ENCODE measurements at regions of chr14 and their contacts with region 1.

Region 1: DNA sequence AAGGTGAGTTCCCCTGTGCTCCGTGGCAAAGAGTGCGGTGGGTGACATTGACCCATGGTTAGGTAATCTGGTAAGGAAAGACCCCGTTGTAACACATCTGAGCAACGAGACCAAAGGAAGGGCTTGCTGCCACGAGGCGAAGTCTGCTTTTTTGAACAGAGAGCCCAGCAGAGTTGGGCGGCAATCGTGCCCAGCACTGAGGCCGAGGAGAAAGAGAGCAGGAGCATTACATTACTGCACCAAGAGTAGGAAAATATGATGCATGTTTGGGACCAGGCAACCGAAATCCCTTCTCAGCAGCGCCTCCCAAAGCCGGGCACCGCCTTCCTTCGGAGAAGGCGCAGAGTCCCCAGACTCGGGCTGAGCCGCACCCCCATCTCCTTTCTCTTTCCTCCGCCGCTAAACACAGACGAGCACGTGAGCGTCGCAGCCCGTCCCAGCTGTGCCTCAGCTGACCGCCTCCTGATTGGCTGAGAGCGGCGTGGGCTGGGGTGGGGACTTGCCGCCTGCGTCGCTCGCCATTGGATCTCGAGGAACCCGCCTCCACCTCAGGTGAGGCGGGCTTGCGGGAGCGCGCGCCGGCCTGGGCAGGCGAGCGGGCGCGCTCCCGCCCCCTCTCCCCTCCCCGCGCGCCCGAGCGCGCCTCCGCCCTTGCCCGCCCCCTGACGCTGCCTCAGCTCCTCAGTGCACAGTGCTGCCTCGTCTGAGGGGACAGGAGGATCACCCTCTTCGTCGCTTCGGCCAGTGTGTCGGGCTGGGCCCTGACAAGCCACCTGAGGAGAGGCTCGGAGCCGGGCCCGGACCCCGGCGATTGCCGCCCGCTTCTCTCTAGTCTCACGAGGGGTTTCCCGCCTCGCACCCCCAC is at the start of gene HIF1A:
- DNase-seq: peak; percentile 83 to 98 (median 96)
- ATAC-seq: peak; percentile 97
- H3K4me3 ChIP-seq: peak within 1 kb of the TSS; percentile 92
- H3K4me3 Mint-ChIP-seq: peak within 1 kb of the TSS; percentile 95 to 99 (median 98)
- H3K27ac ChIP-seq: peak within 1 kb of the TSS; percentile 99
- H3K27ac Mint-ChIP-seq: peak within 1 kb of the TSS; percentile 96 to 99 (median 99)
- H3K4me1 ChIP-seq: peaks cover 9 to 17% of the 10 kb centered on the region in 2 donors
- H3K4me1 Mint-ChIP-seq: peaks cover 36 to 69% (median 62%) of the 10 kb centered on the region in 7 donors
- H3K27me3 ChIP-seq: no peaks in the 10 kb centered on the region
- H3K27me3 Mint-ChIP-seq: peaks cover 0 to 2% (median 0%) of the 10 kb centered on the region in 5 donors
- total RNA-seq, gene HIF1A: 88.8 to 358 (median 143) TPM

Region 2: GRCh38 chr14:61280526-61281185 is 414.4 kb before region 1 on chr14:
- CTCF ChIA-PET with region 1: interaction called, 3 read pairs
- POLR2A ChIA-PET with region 1: no interaction called
- intact Hi-C with region 1: loop called in 1 of 2 experiments (anchors 1 kb)
- DNase-seq: peak; percentile 59 to 83 (median 79)
- ATAC-seq: peak; percentile 92
- H3K4me3 ChIP-seq: peak overlapping the region; percentile 87
- H3K4me3 Mint-ChIP-seq: peak overlapping the region; percentile 89 to 97 (median 91)
- H3K27ac ChIP-seq: peak overlapping the region; percentile 77
- H3K27ac Mint-ChIP-seq: peak overlapping the region; percentile 83 to 95 (median 93)
- H3K4me1 ChIP-seq: peaks cover 0 to 10% of the 10 kb centered on the region in 2 donors
- H3K4me1 Mint-ChIP-seq: peaks cover 18 to 54% (median 35%) of the 10 kb centered on the region in 7 donors
- H3K27me3 ChIP-seq: no peaks in the 10 kb centered on the region
- H3K27me3 Mint-ChIP-seq: peaks cover 0 to 52% (median 0%) of the 10 kb centered on the region in 5 donors

Region 3: DNA sequence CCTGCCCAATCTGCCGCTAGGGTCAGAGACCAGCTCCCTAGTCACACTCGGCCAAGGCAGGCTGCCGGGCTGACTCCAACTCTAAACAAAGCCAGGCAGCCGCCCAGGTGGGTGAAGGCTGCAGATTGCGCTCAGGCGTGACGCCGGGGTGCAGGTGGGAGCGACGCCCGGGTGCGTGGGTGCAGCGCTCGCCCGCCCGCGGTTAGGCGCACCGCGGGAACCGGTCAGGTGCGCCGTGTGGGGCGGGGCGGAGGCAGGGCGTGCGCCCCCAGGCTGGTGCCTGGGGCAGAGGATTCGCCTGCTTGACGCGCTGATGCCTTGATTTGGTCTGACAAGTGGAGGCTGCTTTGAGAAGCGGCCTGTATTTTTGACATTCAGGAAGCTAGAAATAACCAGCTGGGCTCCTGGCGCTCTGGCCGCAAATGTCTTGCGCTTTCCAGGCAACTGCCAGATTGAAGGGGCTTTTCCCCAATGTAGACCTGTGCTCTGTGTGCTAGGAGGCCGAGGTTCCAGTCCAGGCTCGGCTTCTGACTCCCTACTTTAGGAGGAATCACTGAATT is 126.4 kb before region 1 on chr14:
- CTCF ChIA-PET with region 1: interaction called, 3 read pairs
- POLR2A ChIA-PET with region 1: interaction called, 5 read pairs
- intact Hi-C with region 1: loop called in 1 of 2 experiments (anchors 1 kb)
- DNase-seq: peak; percentile 49 to 77 (median 73)
- ATAC-seq: peak; percentile 86
- H3K4me3 ChIP-seq: peak overlapping the region; percentile 47
- H3K4me3 Mint-ChIP-seq: peak overlapping the region; percentile 74 to 89 (median 82)
- H3K27ac ChIP-seq: peak overlapping the region; percentile 26
- H3K27ac Mint-ChIP-seq: peak overlapping the region; percentile 44 to 95 (median 86)
- H3K4me1 ChIP-seq: peaks cover 0 to 34% of the 10 kb centered on the region in 2 donors
- H3K4me1 Mint-ChIP-seq: peaks cover 40 to 77% (median 57%) of the 10 kb centered on the region in 7 donors
- H3K27me3 ChIP-seq: no peaks in the 10 kb centered on the region
- H3K27me3 Mint-ChIP-seq: peaks cover 0 to 10% (median 0%) of the 10 kb centered on the region in 5 donors

Region 4: GRCh38 chr14:61662437-61663311 is 32.4 kb before region 1 on chr14:
- CTCF ChIA-PET with region 1: interaction called, 3 read pairs
- POLR2A ChIA-PET with region 1: interaction called, 25 read pairs
- intact Hi-C with region 1: loop called (anchors 1 kb)
- DNase-seq: peak in 8 of 9 donors; percentile 23 to 56 (median 46)
- ATAC-seq: peak; percentile 91
- H3K4me3 ChIP-seq: peak overlapping the region; percentile 26
- H3K4me3 Mint-ChIP-seq: peak overlapping the region; percentile 49 to 91 (median 79)
- H3K27ac ChIP-seq: peak overlapping the region; percentile 54
- H3K27ac Mint-ChIP-seq: peak overlapping the region; percentile 70 to 96 (median 89)
- H3K4me1 ChIP-seq: peaks cover 40 to 65% of the 10 kb centered on the region in 2 donors
- H3K4me1 Mint-ChIP-seq: peaks cover 45 to 68% (median 63%) of the 10 kb centered on the region in 7 donors
- H3K27me3 ChIP-seq: no peaks in the 10 kb centered on the region
- H3K27me3 Mint-ChIP-seq: no peaks in the 10 kb centered on the region

Region 5: DNA sequence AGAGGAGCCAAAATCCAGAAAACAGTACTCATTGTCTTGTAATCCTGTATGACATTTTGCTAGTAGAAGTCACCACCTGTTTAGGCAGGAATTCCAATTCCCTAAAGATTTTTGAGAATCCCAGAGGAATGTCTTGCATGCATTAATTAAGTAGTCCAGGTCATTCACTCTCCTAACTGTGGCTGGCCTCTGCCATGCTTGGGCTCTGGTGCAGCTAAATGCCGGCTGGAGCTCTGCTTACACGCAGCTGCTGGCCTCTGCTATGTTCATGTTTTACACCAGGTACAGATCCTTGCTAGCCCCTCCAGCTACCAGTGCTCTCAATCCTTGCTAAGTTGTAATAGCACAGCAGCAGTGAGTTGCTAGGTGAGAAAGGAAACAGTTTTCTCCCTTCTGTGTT is 16.1 kb before region 1 on chr14:
- CTCF ChIA-PET with region 1: interaction called, 4 read pairs
- POLR2A ChIA-PET with region 1: interaction called, 13 read pairs
- intact Hi-C with region 1: no loop called
- DNase-seq: no peak
- ATAC-seq: no peak
- H3K4me3 ChIP-seq: no peak overlapping the region
- H3K4me3 Mint-ChIP-seq: no peak overlapping the region
- H3K27ac ChIP-seq: no peak overlapping the region
- H3K27ac Mint-ChIP-seq: no peak overlapping the region
- H3K4me1 ChIP-seq: peaks cover 0 to 4% of the 10 kb centered on the region in 2 donors
- H3K4me1 Mint-ChIP-seq: peaks cover 3 to 30% (median 17%) of the 10 kb centered on the region in 7 donors
- H3K27me3 ChIP-seq: no peaks in the 10 kb centered on the region
- H3K27me3 Mint-ChIP-seq: peaks cover 0 to 7% (median 0%) of the 10 kb centered on the region in 5 donors

Region 6: DNA sequence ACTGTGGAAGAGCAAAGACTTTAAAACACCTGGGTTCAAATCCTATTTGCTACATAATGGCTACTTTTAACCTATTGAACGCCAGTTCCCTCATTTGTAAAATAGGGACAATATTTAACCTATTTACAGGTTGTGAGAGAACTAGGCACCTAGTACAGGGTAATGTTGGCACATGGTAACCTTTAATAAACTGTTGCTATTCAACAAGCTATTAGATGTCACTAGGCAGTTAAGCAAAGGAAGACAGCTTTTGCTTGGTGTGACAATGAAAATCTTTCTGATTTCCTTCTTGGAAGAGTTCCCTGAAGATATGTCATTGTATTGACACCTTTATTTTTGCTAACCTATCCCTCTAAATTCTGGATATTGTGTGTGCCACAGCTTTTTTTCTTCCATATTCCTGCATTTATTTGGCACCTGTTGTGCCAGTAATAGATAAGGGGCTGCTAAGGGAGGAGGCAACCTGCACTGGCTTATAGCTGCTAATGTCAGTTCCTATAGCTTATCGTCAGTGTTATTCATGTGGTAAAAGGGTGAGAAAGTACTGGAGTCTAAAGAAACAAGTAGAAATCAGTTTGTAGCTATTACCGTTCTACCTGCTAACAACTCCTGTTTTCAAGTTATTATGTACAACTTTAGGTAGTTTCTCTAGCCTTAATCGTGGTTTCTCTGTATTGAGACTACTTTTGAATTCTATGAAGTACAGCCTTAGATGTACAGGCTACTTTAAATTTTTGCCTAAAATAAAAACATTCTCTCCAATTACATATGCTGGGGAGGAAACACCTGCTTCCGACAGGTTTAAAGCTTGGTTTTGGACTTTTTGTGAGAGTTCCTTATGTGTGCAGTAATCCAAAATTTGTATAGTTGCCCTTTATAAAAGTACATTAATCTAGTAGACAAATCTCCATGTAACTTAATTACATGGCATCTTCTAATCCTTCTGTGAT is 24.6 kb after region 1 on chr14:
- CTCF ChIA-PET with region 1: interaction called, 3 read pairs
- POLR2A ChIA-PET with region 1: interaction called, 17 read pairs
- intact Hi-C with region 1: loop called in 1 of 2 experiments (anchors 1 kb)
- DNase-seq: peak in 7 of 9 donors; percentile 16 to 61 (median 36)
- ATAC-seq: peak; percentile 85
- H3K4me3 ChIP-seq: peak overlapping the region; percentile 6
- H3K4me3 Mint-ChIP-seq: peak overlapping the region; percentile 5 to 80 (median 72)
- H3K27ac ChIP-seq: peak overlapping the region; percentile 56
- H3K27ac Mint-ChIP-seq: peak overlapping the region; percentile 28 to 90 (median 80)
- H3K4me1 ChIP-seq: peaks cover 23 to 35% of the 10 kb centered on the region in 2 donors
- H3K4me1 Mint-ChIP-seq: peaks cover 33 to 91% (median 81%) of the 10 kb centered on the region in 7 donors
- H3K27me3 ChIP-seq: no peaks in the 10 kb centered on the region
- H3K27me3 Mint-ChIP-seq: no peaks in the 10 kb centered on the region

Region 7: GRCh38 chr14:61750708-61751474 is 55.8 kb after region 1 on chr14:
- CTCF ChIA-PET with region 1: interaction called, 3 read pairs
- POLR2A ChIA-PET with region 1: no interaction called
- intact Hi-C with region 1: loop called in 1 of 2 experiments (anchors 1 kb)
- DNase-seq: peak; percentile 53 to 89 (median 66)
- ATAC-seq: peak; percentile 92
- H3K4me3 ChIP-seq: peak overlapping the region; percentile 55
- H3K4me3 Mint-ChIP-seq: peak overlapping the region; percentile 75 to 94 (median 85)
- H3K27ac ChIP-seq: peak overlapping the region; percentile 75
- H3K27ac Mint-ChIP-seq: peak overlapping the region; percentile 26 to 88 (median 70)
- H3K4me1 ChIP-seq: no peaks in the 10 kb centered on the region
- H3K4me1 Mint-ChIP-seq: peaks cover 4 to 63% (median 11%) of the 10 kb centered on the region in 7 donors
- H3K27me3 ChIP-seq: no peaks in the 10 kb centered on the region
- H3K27me3 Mint-ChIP-seq: peaks cover 0 to 8% (median 1%) of the 10 kb centered on the region in 5 donors

Measured in naive thymus-derived CD4-positive, alpha-beta T cell (primary cell).